HAP-1 (cell line): ENCODE measurements at regions of chr12 and their contacts with region 1.

Region 1: GRCh38 chr12:132414634-132415326 is 75.2 kb upstream of the FBRSL1 start:
- DNase-seq: peak; percentile 62 to 92
- H3K4me3 ChIP-seq: no peak overlapping the region
- H3K4me1 ChIP-seq: no peaks in the 10 kb centered on the region
- H3K27me3 ChIP-seq: peaks cover 5% of the 10 kb centered on the region

Region 2: GRCh38 chr12:131402781-131403396 is 1011.9 kb before region 1 on chr12:
- in situ Hi-C with region 1: no loop called
- DNase-seq: no peak
- H3K4me3 ChIP-seq: no peak overlapping the region
- H3K4me1 ChIP-seq: no peaks in the 10 kb centered on the region
- H3K27me3 ChIP-seq: no peaks in the 10 kb centered on the region

Region 3: DNA sequence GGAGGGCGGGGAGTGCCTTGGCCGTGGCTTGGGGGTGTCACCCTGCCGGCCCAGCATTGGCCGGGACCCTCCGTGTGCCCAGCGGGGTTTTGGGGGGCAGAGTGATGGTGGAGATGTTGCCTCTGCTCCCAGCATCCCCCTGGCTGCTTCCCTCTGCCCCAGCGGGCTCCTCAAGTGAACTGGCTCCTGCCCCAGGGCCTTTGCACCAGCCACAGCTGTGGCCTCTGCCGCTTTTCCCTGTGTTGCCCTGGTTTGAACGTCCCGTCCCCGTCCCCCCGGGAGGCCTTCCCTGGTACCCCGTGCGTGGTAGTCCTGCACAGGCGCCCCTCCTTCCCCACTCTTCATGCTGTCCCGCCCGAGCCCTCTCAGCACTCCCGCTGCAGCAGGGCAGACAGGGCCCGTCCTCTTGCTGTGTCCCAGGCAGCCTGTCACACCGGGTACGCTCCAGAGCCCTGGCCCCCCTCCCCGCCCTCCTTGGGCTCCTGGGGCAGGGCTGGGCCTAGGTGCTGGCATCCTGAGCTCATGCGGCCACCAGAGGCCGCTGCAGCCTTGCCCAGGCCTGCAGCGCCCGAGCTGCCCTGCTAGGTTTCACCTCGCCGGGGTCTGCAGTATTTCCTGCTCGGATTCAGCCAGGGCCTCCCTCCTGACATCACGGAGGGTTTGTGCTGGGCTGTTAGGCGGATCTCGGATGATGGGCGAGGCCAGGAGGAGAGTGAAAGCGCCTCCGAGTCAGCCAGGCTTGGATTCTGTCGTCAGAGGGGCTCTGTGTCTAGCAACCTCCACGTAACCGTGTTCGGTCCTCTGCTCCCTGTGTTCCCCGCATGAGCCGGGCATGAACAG is 261.1 kb before region 1 on chr12:
- in situ Hi-C with region 1: loop called (anchors 5 kb)
- DNase-seq: peak; percentile 55 to 82
- H3K4me3 ChIP-seq: no peak overlapping the region
- H3K4me1 ChIP-seq: no peaks in the 10 kb centered on the region
- H3K27me3 ChIP-seq: no peaks in the 10 kb centered on the region

Region 4: DNA sequence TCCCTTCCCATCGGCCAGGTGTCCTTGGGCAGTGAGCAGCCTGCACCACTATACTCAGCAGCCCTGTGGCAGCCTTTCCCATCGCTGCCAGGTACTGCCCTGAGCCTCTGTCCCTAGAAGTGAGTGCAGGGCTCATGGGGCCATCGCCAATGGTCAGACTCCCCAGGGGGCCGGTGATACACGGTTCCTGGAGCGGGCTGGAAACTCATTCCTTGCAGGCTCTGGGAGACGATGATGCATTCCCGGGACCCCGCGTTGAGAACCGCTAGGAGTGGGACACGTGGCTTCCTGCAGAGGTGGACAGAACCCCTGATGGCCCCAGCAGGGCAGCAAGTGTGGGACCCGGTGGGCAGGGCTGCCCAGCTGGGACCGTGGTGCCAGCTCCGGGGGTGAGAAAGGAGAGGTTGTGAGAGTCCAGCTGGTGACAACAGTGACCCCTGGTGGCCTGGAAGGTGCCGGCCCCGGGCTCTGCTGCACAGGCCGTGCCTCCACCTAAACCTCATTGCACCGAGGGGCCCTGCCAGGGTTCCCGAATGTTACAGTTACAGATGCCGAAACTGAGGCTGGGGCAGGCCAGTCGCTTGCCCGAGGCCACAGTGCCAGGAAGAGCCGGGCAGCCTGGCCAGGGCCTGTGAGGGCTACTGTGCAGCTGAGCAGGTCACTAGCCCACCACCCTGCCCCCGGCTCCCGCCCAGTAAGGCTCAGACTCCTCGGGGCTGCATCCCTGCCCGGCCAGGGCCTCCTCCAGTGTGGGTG is 109.0 kb after region 1 on chr12:
- in situ Hi-C with region 1: loop called (anchors 10 kb)
- DNase-seq: peak; percentile 40 to 84
- H3K4me3 ChIP-seq: no peak overlapping the region
- H3K4me1 ChIP-seq: no peaks in the 10 kb centered on the region
- H3K27me3 ChIP-seq: no peaks in the 10 kb centered on the region

Region 5: DNA sequence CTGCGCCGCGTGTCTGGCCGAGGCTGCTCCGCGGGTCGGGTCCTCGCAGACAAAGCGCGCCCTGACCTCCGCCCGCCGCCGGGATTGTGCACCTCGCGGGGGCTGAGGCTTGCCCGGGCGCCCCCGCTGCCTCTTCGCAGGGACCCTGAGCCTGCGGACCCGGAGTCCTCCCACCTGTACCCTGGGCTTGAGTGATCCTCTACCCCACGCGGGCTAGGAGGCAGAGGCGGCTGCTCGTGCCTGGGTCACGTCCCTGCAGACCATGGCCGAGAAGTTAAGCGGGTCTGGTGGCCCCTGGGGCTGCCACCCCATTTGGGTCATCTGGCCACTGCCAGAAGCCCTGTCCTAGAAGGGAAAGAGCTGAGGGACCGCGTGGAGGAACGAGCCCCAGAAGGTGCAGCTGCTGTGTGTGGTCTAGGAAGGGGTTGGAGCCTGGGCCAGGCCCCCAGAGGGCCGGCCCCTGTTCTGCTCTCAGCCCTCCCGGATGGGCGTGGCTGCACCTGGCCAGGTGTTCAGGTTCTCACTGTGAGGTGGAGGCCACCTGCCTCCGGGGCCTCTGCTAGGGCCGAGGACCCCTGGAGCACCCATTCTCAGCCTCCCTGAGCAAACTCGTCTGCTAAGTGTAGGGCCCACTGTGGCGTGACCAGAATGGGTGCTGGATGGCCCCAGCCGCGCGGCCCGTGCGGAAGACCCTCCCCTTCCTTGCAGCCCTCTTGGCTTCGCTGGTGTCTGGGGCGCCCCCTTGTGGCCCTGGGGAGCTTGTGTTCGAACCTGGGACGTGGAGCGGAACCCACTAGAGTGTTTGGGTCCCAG is 146.0 kb after region 1 on chr12:
- in situ Hi-C with region 1: loop called (anchors 10 kb)
- DNase-seq: peak; percentile 64 to 94
- H3K4me3 ChIP-seq: peak overlapping the region; percentile 60
- H3K4me1 ChIP-seq: no peaks in the 10 kb centered on the region
- H3K27me3 ChIP-seq: no peaks in the 10 kb centered on the region